ENCODE measurements at regions of chr5 and their contacts with region 1.

Region 1: DNA sequence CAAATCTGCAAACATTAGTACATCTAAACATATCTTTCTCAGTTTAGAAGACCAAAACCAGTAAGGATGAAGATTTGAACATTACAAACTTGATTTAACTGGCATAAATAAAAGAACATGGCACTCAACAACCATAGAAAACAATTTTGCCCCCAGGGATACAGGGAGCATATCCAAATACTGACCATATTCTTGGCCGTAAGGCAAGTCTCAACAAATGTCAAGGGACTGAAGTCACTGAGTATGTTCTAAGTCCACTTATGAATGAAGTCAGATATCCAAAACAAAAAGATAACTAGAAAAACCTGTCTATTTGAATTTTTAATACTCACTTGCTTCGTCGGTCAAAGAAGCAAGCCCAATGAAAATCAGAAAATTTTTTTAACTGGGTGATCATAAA is 14.1 kb downstream of the FEM1C start:
- DNase-seq: no peak
- ATAC-seq: no peak

Region 2: DNA sequence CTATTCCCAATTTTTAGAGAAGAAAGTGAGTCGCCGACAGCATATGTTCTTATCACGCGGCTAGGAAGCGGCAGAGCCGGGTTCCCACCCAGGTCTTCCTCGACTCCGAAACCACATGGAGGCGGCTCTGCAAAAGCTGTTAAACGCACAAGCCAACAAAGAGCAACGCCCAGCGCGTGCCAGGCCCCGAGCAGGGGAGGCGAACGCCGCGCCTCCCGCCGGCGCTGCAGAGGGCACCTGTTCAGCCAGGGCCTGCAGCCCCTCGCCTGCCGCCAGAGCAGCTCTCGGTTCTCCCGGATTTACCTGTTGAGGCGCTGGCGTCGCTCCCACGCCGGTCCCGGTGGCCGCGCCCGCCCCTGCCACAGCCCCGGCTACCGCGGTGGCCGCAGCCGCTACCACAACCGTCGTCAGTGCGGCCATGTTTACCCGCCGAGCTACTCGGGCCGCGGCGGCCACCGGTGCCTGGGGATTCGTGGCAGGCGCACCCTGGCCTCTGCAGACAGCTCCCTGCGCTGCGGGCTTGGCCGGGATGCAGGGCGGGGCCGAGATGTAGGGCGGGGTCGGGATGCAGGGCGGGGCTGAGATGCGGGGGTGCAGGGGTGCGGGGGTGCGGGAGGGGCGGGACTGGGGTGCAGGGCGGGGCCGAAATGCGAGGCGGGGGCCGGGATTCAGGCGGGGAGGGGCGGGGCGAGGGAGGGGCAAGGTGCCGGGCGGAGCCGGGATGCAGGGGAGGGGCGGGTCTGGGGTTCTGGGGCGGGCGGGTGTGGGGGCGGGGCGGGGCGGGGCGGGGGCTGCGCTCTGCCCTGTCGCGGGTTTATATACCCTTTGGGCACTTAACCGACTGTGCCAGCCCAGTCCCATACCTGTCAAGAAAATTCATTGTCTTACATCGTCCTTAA is 234.1 kb before region 1 on chr5 and contains the start of gene CCDC112:
- intact Hi-C with region 1: no loop called
- DNase-seq: peak; percentile 88 to 91
- ATAC-seq: peak; percentile 88
- total RNA-seq, gene CCDC112: 8.4 to 10.8 TPM

Region 3: GRCh38 chr5:115419846-115420585 is 110.4 kb before region 1 on chr5:
- intact Hi-C with region 1: loop called in 1 of 2 experiments (anchors 10 kb)
- DNase-seq: no peak
- ATAC-seq: peak; percentile 44

Region 4: DNA sequence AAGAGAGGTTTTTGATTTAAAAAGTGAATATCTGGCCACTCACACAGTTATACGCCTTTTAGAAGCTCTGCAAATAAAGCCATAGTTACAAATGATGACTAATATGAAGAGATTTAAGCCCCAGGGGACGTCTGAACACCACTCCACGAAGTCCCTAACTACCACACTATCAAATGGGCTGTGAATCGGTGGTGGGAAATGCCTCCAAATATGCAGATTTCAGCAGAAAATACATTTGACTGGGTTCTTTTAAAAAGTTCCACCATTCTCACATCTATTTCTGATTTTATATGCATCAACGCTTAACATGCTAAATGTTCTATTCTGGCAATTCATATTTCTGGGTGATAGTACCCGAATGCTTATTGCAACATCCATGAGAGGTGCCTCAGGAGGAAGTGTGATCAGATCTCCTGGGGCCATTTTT is 49.3 kb after region 1 on chr5:
- intact Hi-C with region 1: no loop called
- DNase-seq: no peak
- ATAC-seq: no peak

Region 5: DNA sequence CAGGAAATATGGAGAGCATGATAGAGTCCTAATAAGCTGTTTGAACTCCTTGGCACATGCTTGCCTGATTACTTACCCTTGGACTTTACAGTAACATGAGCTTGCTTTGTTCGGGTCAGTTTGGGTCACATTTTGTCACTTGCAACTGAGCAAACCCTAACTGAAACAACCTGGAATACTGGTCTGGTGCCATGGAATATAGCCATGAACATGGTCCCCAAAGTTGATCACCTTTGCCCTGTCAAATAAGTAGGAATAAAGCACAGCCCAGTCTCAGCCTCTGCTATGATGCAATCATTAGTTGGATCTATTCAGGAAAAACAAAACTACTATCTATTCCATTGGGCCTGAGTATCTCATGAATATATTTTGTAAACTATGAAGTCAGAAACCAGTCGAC is 267.8 kb after region 1 on chr5:
- intact Hi-C with region 1: no loop called
- DNase-seq: no peak
- ATAC-seq: no peak

Measured in left colon (tissue), 2 donors.